PC-9 (cell line): ENCODE measurements at regions of chr1 and their contacts with region 1.

Region 1: DNA sequence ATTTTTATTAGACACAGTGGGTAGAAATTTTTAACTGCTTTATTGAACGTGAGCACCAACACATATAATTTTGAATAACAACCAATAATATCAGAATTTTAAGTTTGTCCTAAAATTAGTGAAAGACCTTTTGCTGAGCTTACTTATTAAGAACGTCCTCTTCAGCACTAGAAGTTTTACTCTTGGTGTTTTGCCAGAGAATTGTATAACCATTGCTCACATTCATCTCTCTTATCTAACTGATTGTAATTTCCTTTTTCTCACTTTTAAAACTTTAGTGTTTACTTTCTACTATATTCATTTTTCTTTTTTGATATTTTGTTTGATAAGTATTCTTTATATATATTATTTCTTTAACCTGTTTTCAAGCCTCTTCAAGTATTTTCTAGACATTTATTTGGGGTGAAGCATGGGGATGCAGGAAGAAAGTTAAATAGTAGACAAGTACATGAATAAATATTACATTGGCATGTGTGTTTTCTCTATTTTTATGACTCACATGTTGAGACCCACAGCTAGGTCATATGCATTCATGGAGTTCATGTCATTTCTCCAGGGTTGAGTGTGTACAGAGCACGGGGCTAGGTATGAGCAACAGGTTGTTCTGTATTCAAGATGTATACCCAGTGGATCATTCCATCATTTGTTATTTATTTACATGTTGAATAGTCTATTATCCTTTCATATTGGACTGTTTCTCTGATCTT is 90.6 kb downstream of the ATP6V1G3 start:
- DNase-seq: peak in 1 of 2 experiments; percentile 37
- H3K4me3 ChIP-seq: peak overlapping the region; percentile 21; the same call in 1 of the 2 replicates
- H3K27ac ChIP-seq: peak overlapping the region; percentile 79
- H3K4me1 ChIP-seq: peaks cover 21% of the 10 kb centered on the region
- H3K27me3 ChIP-seq: no peaks in the 10 kb centered on the region
- CTCF ChIP-seq: no peak

Region 2: DNA sequence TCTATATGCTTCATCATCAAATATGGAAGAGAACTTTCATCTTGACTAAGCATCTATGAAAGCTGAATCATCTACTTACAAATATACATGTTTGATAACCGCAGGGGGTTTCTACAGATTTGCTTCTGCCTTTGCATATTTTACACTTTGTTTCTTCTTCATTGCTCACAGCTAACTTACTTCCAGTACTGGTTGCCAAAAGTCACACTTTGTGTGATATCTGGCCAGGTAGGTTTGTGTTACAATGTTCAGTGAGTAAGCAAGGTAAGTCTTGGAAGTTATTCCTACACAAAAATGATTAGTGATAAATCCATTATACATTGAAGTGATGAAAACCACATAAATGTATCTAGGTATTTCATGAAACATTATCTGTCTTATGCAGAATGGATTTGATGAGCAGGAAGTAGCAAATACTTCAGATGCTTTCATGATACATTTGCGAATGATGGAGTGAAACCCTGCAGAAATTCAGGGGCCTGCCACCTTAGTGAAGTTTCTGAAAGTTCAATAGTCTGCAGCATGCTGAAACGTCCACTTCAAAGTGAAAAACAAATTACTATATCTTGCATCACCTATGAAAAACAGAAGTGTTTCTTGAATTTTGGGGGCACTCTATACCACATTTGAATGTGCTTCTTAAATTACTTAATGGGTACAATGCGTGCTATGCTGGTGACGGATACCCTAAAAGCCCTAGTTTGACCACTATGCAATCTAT is 96.7 kb before region 1 on chr1:
- CTCF ChIA-PET with region 1: no interaction called
- POLR2A ChIA-PET with region 1: no interaction called
- intact Hi-C with region 1: no loop called
- DNase-seq: no peak
- H3K4me3 ChIP-seq: no peak overlapping the region
- H3K27ac ChIP-seq: no peak overlapping the region
- H3K4me1 ChIP-seq: no peaks in the 10 kb centered on the region
- H3K27me3 ChIP-seq: no peaks in the 10 kb centered on the region
- CTCF ChIP-seq: no peak

Region 3: DNA sequence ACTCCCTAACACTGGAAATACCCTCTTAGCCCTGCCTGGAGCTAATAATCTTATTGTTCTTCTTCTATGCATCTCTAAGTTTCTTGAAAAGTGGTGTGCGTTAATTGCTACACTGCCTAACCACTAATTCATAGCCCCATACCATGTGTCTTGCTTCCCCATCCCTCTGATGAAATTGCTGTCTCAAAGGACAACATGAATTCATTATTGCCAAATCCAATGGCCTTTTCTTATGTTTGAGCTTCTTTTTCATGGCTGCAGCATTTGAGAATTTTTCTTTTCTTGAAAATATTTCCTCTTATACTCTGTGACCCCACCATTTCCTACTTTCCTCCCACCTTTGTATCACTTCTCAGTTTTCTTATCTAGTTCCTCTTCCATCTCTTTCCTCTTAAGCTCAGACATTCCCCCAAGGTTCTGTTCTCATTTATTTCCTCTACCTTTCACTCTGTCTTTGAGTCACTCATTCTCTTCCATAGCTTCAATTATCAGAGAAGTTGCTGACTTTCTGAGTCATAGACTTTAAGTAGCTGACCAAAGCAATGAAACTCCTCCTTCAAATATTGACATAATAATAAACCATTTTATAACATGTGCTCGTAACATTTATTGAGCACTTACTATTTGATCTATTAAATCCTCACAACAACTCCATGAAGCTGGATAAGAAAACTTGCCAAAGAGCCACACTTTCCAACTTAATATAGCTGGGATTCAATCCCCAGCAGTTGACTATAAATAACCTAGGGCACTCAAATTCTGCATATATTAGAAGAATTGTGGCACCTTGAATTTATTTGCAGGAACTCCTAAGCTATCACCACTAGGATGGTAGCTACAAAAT is 126.1 kb after region 1 on chr1:
- CTCF ChIA-PET with region 1: no interaction called
- POLR2A ChIA-PET with region 1: interaction called, 14 read pairs
- intact Hi-C with region 1: no loop called
- DNase-seq: no peak
- H3K4me3 ChIP-seq: no peak overlapping the region
- H3K27ac ChIP-seq: no peak overlapping the region
- H3K4me1 ChIP-seq: no peaks in the 10 kb centered on the region
- H3K27me3 ChIP-seq: no peaks in the 10 kb centered on the region
- CTCF ChIP-seq: no peak

Region 4: GRCh38 chr1:198669023-198669698 is 219.3 kb after region 1 on chr1:
- CTCF ChIA-PET with region 1: no interaction called
- POLR2A ChIA-PET with region 1: no interaction called
- intact Hi-C with region 1: no loop called
- DNase-seq: peak; percentile 63 to 82
- H3K4me3 ChIP-seq: no peak overlapping the region
- H3K27ac ChIP-seq: peak overlapping the region; percentile 36
- H3K4me1 ChIP-seq: peaks cover 25% of the 10 kb centered on the region
- H3K27me3 ChIP-seq: no peaks in the 10 kb centered on the region
- CTCF ChIP-seq: no peak

Region 5: DNA sequence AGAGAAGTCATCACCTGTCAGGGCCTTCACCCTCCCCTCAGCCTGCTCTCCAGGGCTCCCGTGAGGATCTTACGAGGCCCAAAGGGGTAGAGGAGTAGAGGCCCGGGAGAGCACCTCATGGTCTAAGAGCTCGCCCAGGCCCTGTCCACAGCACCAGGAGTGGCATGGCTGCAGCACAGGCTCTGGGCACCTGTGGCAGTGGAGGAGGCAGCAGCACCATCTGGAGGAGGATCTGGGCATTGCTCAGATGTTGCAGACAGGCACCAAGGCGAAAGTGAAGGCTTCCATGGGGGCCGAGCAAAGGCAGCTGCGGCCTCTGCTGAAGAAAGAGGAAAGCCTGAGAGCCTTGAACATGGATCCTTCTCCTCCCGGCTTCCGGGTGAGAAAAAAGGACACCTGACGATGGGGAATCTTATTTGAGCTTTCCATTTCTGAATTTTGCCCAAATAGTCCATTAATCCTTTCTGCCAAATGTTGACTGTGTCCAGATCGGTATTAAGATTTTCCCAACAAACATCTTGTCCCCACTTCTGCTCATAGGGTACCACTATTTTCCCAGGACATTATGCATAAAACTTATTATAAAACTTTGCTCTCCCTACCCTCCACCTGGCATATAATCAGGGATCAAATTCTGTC is 793.7 kb after region 1 on chr1:
- CTCF ChIA-PET with region 1: no interaction called
- POLR2A ChIA-PET with region 1: no interaction called
- intact Hi-C with region 1: no loop called
- DNase-seq: peak in 1 of 2 experiments; percentile 41
- H3K4me3 ChIP-seq: no peak overlapping the region
- H3K27ac ChIP-seq: no peak overlapping the region
- H3K4me1 ChIP-seq: peaks cover 5% of the 10 kb centered on the region; the same call in 1 of the 2 replicates
- H3K27me3 ChIP-seq: no peaks in the 10 kb centered on the region
- CTCF ChIP-seq: peak; percentile 54